ENCODE measurements at regions of chr10 and their contacts with region 1.

Region 1: GRCh38 chr10:71713135-71714030 is 6.2 kb downstream of the C10orf105 start:
- DNase-seq: peak; percentile 54
- H3K4me3 Mint-ChIP-seq: peak overlapping the region; percentile 67
- H3K27ac Mint-ChIP-seq: peak overlapping the region; percentile 94
- H3K4me1 Mint-ChIP-seq: peaks cover 64% of the 10 kb centered on the region
- H3K27me3 Mint-ChIP-seq: no peaks in the 10 kb centered on the region

Region 2: GRCh38 chr10:71742301-71743088 is 29.1 kb after region 1 on chr10:
- CTCF ChIA-PET with region 1: interaction called, 6 read pairs
- intact Hi-C with region 1: loop called (anchors 2 kb)
- DNase-seq: no peak
- H3K4me3 Mint-ChIP-seq: peak overlapping the region; percentile 25
- H3K27ac Mint-ChIP-seq: peak overlapping the region; percentile 98
- H3K4me1 Mint-ChIP-seq: peaks cover 99% of the 10 kb centered on the region
- H3K27me3 Mint-ChIP-seq: no peaks in the 10 kb centered on the region

Region 3: DNA sequence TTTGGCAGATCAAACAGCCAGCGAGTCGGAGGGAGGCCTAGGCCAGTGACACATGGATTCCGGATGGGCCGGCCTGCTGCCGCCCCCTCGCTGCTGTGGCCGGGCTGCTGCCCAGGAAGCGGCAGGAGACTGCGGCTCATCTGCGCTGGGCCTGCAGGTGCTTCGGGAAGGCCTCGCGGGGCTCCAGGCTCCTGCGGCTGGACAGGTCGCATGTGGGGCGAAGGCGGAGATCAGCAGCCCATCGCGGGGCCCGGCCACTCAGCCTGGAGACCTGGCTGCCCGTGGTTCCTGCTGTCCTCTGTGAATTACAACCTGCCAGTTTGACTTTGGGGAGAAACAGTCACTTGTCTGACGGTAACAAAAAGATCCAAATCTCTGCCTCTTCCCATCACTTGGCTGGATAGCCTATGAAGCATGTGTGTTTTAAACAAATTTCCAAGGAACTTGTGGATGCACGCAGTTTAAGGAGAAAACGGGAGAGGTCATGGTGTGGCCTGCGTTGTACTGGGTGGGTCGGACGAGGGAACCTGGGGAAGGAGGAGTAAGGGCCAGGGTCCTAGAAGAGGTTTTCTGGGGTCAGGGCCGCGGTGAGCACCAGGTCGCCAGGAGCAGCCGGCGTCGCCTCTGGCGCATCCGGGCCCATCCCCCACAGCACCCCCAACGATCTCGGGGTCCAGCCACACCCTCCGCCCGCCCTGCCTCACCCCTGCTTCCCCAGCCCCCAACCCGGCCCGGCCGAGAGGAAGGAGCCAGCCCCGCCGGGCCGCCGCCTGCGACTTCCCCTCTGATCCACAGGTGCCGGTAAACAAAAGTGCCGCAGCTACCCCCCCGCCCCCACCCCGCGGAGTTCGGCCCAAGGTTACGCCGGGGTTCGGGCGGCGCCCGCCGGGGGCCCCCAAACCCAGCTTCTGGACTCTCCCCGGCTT is 373.3 kb after region 1 on chr10:
- CTCF ChIA-PET with region 1: no interaction called
- intact Hi-C with region 1: no loop called
- DNase-seq: peak; percentile 71
- H3K4me3 Mint-ChIP-seq: peak overlapping the region; percentile 87
- H3K27ac Mint-ChIP-seq: peak overlapping the region; percentile 97
- H3K4me1 Mint-ChIP-seq: peaks cover 67% of the 10 kb centered on the region
- H3K27me3 Mint-ChIP-seq: no peaks in the 10 kb centered on the region